MCF 10A (cell line): ENCODE measurements at regions of chr7 and their contacts with region 1.

Region 1: DNA sequence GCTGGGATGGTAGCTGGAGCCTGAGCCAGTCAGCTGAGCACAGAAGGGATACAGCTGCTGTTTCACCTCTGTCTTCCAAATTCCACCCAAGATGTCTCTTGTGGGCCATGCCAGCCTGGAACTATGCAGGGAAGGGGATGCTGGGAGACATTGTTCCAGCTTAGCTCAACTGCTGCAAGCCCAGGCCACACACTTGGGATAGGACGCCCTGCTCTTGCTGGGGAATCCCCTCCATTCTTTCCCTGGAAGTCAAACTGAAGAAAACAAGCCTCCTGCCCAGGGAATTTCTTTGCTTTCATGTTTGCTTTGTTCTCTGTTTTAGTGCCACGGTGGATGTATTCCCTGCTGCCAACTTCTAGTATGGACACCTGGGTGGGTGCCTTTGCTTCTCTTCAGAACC is 55.2 kb upstream of the CDK13 start:
- DNase-seq: no peak
- H3K4me3 Mint-ChIP-seq: no peak overlapping the region
- H3K27ac Mint-ChIP-seq: no peak overlapping the region
- H3K4me1 Mint-ChIP-seq: no peaks in the 10 kb centered on the region
- H3K27me3 Mint-ChIP-seq: peaks cover 11% of the 10 kb centered on the region
- CTCF ChIP-seq: no peak

Region 2: GRCh38 chr7:38889861-38890432 is 1005.0 kb before region 1 on chr7:
- CTCF ChIA-PET with region 1: no interaction called
- POLR2A ChIA-PET with region 1: no interaction called
- intact Hi-C with region 1: no loop called
- DNase-seq: no peak
- H3K4me3 Mint-ChIP-seq: no peak overlapping the region
- H3K27ac Mint-ChIP-seq: no peak overlapping the region
- H3K4me1 Mint-ChIP-seq: peaks cover 8% of the 10 kb centered on the region
- H3K27me3 Mint-ChIP-seq: no peaks in the 10 kb centered on the region
- CTCF ChIP-seq: no peak

Region 3: DNA sequence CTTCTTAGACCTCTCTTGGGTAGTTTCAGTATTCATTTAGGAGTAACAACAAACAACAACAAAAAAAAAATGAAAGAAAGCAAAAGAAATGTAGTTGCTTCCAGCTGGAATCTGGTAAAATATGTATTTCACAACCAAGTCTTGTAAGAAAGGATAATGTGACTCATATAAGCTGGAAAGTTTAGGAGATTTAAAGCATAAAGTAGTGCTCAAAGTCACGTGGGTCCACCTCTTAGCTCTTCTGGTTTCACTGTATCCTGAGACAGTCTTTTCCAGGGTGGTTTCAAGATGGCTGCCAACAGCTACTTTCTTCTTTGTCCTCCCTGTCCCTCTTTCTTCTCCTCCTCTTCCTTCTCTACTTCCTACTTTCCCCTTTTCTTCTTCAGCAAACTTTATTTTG is 14.3 kb before region 1 on chr7:
- CTCF ChIA-PET with region 1: interaction called, 21 read pairs
- POLR2A ChIA-PET with region 1: no interaction called
- intact Hi-C with region 1: no loop called
- DNase-seq: peak; percentile 40
- H3K4me3 Mint-ChIP-seq: no peak overlapping the region
- H3K27ac Mint-ChIP-seq: peak overlapping the region; percentile 57
- H3K4me1 Mint-ChIP-seq: peaks cover 8% of the 10 kb centered on the region
- H3K27me3 Mint-ChIP-seq: peaks cover 17% of the 10 kb centered on the region
- CTCF ChIP-seq: no peak

Region 4: DNA sequence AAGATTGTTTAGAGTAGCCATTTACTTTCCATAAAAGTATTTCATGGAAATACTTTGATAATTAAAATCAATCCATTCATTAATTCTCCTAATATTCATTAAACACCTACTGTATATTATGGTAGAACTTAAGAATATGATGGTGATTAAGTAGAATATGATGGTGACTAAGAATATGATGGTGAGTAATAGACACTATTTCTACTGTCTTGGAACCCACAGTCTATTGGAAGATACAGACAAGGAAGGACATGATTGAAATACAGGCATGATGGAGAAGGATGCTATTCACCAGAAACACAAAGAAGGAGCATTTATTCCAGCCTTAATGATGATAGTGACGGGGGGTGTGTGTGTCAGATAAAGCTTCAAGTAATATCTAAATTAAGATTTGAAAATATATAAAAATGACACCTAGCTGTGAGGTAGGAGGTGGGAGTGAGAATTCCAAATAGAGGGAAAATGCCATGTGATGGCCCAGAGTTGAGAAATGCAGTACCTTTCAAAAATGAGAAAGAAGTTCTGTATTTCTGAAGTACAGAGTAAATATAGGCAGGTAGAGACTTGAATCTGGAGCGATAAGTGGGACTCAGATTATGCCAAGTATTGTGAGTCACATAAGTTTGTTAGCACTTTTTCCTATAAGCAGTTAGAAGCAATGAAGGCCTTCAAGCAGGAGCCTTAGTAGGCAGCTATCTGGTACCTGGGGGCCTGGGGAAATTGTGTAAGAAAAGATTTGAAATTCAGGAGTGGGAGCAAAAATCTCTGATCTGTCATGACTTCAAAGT is 42.7 kb after region 1 on chr7:
- CTCF ChIA-PET with region 1: interaction called, 11 read pairs
- POLR2A ChIA-PET with region 1: no interaction called
- intact Hi-C with region 1: no loop called
- DNase-seq: peak; percentile 63
- H3K4me3 Mint-ChIP-seq: no peak overlapping the region
- H3K27ac Mint-ChIP-seq: no peak overlapping the region
- H3K4me1 Mint-ChIP-seq: peaks cover 8% of the 10 kb centered on the region
- H3K27me3 Mint-ChIP-seq: no peaks in the 10 kb centered on the region
- CTCF ChIP-seq: no peak

Region 5: GRCh38 chr7:39958038-39958437 is 63.1 kb after region 1 on chr7:
- CTCF ChIA-PET with region 1: interaction called, 17 read pairs
- POLR2A ChIA-PET with region 1: interaction called, 3 read pairs
- intact Hi-C with region 1: no loop called
- DNase-seq: no peak
- H3K4me3 Mint-ChIP-seq: no peak overlapping the region
- H3K27ac Mint-ChIP-seq: no peak overlapping the region
- H3K4me1 Mint-ChIP-seq: peaks cover 16% of the 10 kb centered on the region
- H3K27me3 Mint-ChIP-seq: no peaks in the 10 kb centered on the region
- CTCF ChIP-seq: no peak

Region 6: GRCh38 chr7:40134428-40135316 is 239.8 kb after region 1 on chr7 and contains the starts of genes MPLKIP and SUGCT:
- CTCF ChIA-PET with region 1: interaction called, 4 read pairs
- POLR2A ChIA-PET with region 1: interaction called, 5 read pairs
- intact Hi-C with region 1: loop called (anchors 2 kb)
- DNase-seq: peak; percentile 86
- H3K4me3 Mint-ChIP-seq: peak within 1 kb of the TSS; percentile 84
- H3K27ac Mint-ChIP-seq: peak within 1 kb of the TSS; percentile 93
- H3K4me1 Mint-ChIP-seq: peaks cover 12% of the 10 kb centered on the region
- H3K27me3 Mint-ChIP-seq: no peaks in the 10 kb centered on the region
- CTCF ChIP-seq: peak; percentile 98
- total RNA-seq, gene MPLKIP: 30.6 and 31.3 TPM in 2 replicates
- total RNA-seq, gene SUGCT: 20.2 and 25.4 TPM in 2 replicates

Region 7: DNA sequence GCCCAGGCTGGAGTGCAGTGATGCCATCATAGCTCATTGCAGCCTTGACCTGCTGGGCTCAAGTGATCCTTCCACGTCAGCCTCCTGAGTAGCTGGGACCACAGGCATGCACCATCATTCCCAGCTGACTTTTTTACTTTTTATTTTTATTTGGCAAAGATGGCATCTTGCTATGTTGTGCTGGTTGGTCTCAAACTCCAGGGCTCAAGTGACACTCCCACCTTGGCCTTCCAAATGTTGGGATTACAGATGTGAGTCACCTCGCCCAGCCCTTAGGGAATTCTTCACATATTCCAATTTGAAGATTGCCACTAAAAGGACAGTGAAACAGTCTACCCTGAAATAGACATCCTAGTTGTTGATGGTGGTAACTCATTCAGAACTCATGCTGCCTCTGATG is 267.6 kb after region 1 on chr7:
- CTCF ChIA-PET with region 1: no interaction called
- POLR2A ChIA-PET with region 1: no interaction called
- intact Hi-C with region 1: no loop called
- DNase-seq: peak; percentile 9
- H3K4me3 Mint-ChIP-seq: no peak overlapping the region
- H3K27ac Mint-ChIP-seq: no peak overlapping the region
- H3K4me1 Mint-ChIP-seq: no peaks in the 10 kb centered on the region
- H3K27me3 Mint-ChIP-seq: no peaks in the 10 kb centered on the region
- CTCF ChIP-seq: no peak

Region 8: GRCh38 chr7:40382145-40382544 is 487.2 kb after region 1 on chr7:
- CTCF ChIA-PET with region 1: no interaction called
- POLR2A ChIA-PET with region 1: no interaction called
- intact Hi-C with region 1: no loop called
- DNase-seq: no peak
- H3K4me3 Mint-ChIP-seq: no peak overlapping the region
- H3K27ac Mint-ChIP-seq: no peak overlapping the region
- H3K4me1 Mint-ChIP-seq: no peaks in the 10 kb centered on the region
- H3K27me3 Mint-ChIP-seq: no peaks in the 10 kb centered on the region
- CTCF ChIP-seq: no peak